ENCODE measurements at regions of chr18 and their contacts with region 1.

Region 1: GRCh38 chr18:50356036-50356945 is 18.6 kb upstream of the SKA1 start:
- DNase-seq: no peak
- ATAC-seq: peak; percentile 40

Region 2: DNA sequence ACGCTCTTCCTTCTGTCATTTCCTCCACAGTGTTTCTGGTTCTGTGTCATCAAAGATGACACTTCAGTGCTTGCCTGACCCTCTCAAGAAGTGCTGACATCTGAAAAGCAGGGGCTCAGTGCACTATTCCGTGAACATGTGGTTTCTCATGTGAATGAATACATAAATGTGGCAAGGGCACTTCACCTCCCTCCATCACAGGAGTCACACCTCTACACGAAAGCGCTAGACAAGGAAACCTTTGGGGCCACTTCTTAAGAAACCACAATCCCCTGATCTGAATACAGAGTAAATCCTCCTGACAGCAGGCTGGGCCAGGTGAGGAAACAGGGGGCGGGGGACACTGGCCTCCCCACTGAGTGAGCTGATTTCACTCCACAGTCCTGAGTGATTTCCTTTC is 397.1 kb before region 1 on chr18:
- intact Hi-C with region 1: no loop called
- DNase-seq: no peak
- ATAC-seq: no peak

Region 3: DNA sequence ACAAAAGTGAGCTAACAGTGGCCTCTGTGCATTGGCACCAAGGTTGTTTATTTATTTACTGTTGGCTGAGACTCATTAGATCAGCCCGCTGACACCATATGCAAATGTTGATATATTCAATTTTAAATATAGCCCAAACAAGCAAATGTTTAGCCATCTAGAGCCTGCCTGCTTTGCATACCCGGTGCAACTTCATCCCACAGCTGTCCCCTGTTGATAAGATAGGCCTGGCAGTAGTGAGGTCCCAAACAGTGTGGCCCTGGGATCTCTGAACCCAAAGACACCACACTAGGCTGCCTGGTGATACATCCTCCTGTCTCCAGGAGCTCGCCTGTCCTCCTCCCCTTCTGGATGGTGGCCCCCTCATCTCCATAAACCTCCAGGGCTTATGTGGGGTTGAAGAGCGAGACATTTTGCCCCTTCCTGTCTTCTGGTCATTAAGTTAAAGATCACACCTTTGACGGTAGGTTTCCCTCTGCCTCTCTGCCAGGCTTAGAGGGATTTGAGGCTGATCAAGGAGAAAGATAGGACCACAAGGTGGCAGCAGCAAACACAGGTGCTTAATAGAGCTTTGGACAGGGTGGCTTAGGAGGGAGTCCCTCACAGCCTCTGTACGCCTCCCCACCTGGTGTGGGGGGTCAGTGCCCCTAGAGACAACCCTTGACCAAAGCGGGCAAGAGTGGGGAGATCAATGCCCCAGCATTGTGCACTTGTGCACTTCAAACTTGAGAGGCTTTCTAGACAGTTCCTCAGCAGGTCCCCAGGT is 137.7 kb before region 1 on chr18:
- intact Hi-C with region 1: loop called (anchors 5 kb)
- DNase-seq: no peak
- ATAC-seq: peak; percentile 58

Region 4: DNA sequence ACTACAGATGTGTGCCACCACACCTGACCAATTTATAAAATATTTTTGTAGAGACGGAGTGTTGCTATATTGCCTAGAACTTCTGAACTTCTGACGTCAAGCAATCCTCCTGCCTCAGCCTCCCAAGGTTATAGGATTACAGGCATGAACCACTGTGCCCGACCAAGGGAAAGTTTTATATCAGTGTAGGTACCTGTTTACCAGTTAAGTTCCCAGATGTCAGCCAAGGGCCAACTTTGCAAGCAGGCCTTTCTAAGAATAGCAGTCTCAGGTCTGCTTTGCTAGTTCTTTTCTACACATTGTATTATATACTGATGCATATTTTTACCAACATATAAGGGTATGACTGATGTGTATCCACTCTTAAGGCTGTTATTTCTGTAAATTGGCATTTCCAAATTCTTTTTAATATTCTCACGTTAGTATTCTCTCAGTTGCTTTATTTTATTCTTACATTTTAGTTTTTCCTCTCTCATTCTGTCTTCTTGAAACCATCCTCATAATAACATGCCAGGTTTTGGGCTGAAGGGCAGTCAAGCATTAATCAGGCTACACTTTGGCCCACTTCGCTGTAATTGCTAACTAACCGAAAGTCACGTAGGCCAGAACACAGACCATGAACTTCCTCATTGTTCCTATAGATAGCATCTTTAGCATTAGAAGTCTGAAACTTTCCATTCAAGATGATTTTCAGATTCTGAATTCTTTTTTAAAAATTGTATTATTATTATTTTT is 43.8 kb before region 1 on chr18:
- intact Hi-C with region 1: no loop called
- DNase-seq: no peak
- ATAC-seq: no peak